ENCODE measurements at regions of chr19 and their contacts with region 1.

Region 1: GRCh38 chr19:17755977-17756670 is 4.8 kb downstream of the FCHO1 start:
- DNase-seq: no peak
- H3K4me3 ChIP-seq: no peak overlapping the region
- H3K27ac ChIP-seq: no peak overlapping the region
- H3K4me1 ChIP-seq: peaks cover 3 to 26% (median 5%) of the 10 kb centered on the region in 3 donors
- H3K27me3 ChIP-seq: peaks cover 0 to 8% (median 0%) of the 10 kb centered on the region in 4 donors
- CTCF ChIP-seq: no peak
- POLR2A ChIP-seq: no peak

Region 2: DNA sequence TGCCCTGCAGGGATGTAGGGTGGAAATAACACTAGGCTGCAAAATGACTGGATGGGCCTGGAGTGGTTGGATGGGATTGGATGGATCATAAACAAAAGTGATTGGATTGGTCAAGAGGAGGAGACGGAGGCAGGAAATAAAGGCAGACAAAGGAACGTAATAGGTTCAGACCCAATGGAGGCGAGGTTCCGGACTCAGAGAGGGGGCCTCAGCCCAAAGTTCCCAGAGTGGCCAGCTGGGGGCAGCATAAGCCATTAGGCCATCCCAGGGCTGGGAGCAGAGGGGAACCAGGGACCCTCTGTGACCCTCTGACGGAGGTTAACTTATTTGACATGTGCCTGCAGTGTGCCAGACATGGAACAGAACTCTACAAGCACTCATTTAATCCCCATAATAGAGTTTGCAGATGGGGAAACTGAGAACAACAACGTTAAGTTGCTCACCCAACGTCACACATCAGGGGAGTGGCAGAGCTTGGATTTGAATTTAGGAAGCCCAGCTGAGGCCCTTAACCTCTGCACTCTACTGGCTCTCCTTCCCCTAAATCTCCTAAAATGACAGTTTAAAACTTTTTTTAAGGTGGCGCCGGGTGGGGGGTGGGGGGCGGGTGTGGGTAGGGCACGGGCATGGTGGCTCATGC is 52.2 kb before region 1 on chr19:
- intact Hi-C with region 1: loop called (anchors 10 kb)
- DNase-seq: no peak
- H3K4me3 ChIP-seq: no peak overlapping the region
- H3K27ac ChIP-seq: no peak overlapping the region
- H3K4me1 ChIP-seq: no peaks in the 10 kb centered on the region
- H3K27me3 ChIP-seq: peaks cover 0 to 34% (median 0%) of the 10 kb centered on the region in 4 donors
- CTCF ChIP-seq: peak; percentile 66 to 87 (median 80)
- POLR2A ChIP-seq: no peak

Region 3: GRCh38 chr19:17718947-17719711 is 37.0 kb before region 1 on chr19 and contains the start of gene MAP1S:
- intact Hi-C with region 1: no loop called
- DNase-seq: no peak
- H3K4me3 ChIP-seq: peak within 1 kb of the TSS; percentile 65 to 96 (median 80)
- H3K27ac ChIP-seq: peak within 1 kb of the TSS; percentile 76 to 90 (median 85)
- H3K4me1 ChIP-seq: peaks cover 23 to 62% (median 41%) of the 10 kb centered on the region in 3 donors
- H3K27me3 ChIP-seq: peaks cover 0 to 11% (median 0%) of the 10 kb centered on the region in 4 donors
- CTCF ChIP-seq: no peak
- POLR2A ChIP-seq: peak in 2 of 4 donors; percentile 52 to 85
- total RNA-seq, gene MAP1S: 4.8 to 16.3 (median 11.4) TPM

Region 4: GRCh38 chr19:17847538-17848366 is 91.6 kb after region 1 on chr19 and contains the start of gene JAK3:
- intact Hi-C with region 1: no loop called
- DNase-seq: no peak
- H3K4me3 ChIP-seq: peak within 1 kb of the TSS; percentile 25 to 65 (median 44)
- H3K27ac ChIP-seq: peak within 1 kb of the TSS; percentile 69 to 91 (median 78)
- H3K4me1 ChIP-seq: peaks cover 13 to 77% (median 29%) of the 10 kb centered on the region in 3 donors
- H3K27me3 ChIP-seq: peaks cover 0 to 47% (median 0%) of the 10 kb centered on the region in 4 donors
- CTCF ChIP-seq: no peak
- POLR2A ChIP-seq: peak in 1 of 4 donors; percentile 38
- total RNA-seq, gene JAK3: 0.87 to 6.5 (median 4.6) TPM